ENCODE measurements at regions of chr11 and their contacts with region 1.

Region 1: DNA sequence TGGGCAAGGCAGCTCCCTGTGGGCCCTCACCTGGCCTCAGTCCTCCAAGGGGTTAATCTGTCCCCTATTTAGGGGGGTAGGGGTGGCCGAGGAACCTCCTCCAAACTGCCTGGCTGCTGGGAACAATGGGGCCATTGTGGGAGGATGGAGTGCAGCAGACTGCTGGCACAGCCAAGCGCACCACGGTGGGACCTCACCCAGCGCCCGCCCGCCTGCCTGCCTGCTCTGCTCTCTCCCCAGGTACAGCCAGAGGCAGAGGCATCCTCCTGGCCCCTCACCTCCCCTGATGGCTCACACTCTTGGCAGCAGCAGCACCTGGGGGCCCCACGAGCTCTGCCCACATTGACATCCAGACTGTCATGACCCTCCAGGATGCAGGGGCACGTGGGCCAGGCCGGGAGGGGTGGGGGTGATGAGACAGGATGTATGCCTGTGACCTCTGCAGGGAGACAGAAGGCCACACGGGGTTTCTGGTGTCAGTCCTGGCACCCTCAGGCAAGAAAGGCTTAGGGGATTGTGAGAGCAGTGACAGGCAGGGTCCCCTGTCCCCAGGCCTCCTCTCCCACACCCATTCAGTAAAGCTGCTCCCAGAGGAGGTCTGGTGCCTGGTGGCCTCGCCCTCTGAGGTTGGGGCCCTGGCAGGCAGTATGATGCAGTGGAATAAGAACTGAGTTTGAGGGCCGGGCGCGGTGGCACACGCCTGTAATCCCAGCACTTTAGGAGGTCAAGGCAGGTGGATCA is 11.4 kb downstream of the BCL9L start:
- DNase-seq: peak; percentile 58 to 95 (median 86)
- ATAC-seq: peak; percentile 54
- H3K4me3 ChIP-seq: peak overlapping the region; percentile 49 to 58
- H3K4me3 Mint-ChIP-seq: peak overlapping the region; percentile 92
- H3K27ac ChIP-seq: peak overlapping the region; percentile 92 to 94
- H3K27ac Mint-ChIP-seq: peak overlapping the region; percentile 99
- H3K4me1 ChIP-seq: peaks cover 84% of the 10 kb centered on the region
- H3K4me1 Mint-ChIP-seq: peaks cover 81% of the 10 kb centered on the region
- H3K27me3 ChIP-seq: no peaks in the 10 kb centered on the region
- H3K27me3 Mint-ChIP-seq: no peaks in the 10 kb centered on the region
- CTCF ChIP-seq: no peak

Region 2: DNA sequence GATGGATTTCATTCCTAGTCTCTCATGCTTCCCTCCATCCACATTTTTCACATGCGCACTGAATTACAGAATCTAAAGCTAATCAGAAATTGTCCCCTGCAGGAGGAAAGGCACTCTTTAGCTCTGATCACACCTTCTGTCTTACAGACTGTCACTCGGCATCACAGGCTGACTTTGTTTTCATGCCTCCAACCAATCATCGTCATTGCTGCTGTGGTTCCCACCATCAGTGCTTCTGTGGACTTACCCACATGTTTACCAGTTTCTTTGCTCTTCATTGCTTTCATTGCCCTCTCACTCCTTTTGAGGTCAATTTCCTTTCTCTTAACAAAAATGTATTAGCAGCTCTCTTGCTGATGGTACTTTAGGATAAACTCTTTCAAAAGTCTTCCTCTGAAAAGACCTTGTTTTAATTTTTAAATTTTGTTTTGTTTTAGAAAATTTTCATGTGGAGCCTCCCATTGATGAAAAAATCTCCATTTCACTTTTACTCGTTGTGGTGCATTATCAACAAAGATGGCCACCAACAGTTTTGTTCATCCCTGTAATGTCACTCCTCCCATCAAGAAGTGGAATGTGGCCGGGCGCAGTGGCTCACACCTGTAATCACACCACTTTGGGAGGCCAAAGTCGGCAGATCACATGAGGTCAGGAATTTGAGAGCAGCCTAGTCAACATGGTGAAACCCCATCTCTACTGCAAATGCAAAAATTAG is 214.7 kb before region 1 on chr11:
- CTCF ChIA-PET with region 1: interaction called, 4 read pairs
- POLR2A ChIA-PET with region 1: interaction called, 10 read pairs
- intact Hi-C with region 1: no loop called
- DNase-seq: peak; percentile 52 to 96 (median 72)
- ATAC-seq: peak; percentile 96
- H3K4me3 ChIP-seq: peak overlapping the region in 1 of 2 experiments; percentile 32
- H3K4me3 Mint-ChIP-seq: peak overlapping the region; percentile 68
- H3K27ac ChIP-seq: peak overlapping the region; percentile 56 to 73
- H3K27ac Mint-ChIP-seq: peak overlapping the region; percentile 99
- H3K4me1 ChIP-seq: peaks cover 70% of the 10 kb centered on the region
- H3K4me1 Mint-ChIP-seq: peaks cover 67% of the 10 kb centered on the region
- H3K27me3 ChIP-seq: no peaks in the 10 kb centered on the region
- H3K27me3 Mint-ChIP-seq: no peaks in the 10 kb centered on the region
- CTCF ChIP-seq: no peak

Measured in CD8-positive, alpha-beta T cell (primary cell).